ENCODE measurements at regions of chr5 and their contacts with region 1.

Region 1: DNA sequence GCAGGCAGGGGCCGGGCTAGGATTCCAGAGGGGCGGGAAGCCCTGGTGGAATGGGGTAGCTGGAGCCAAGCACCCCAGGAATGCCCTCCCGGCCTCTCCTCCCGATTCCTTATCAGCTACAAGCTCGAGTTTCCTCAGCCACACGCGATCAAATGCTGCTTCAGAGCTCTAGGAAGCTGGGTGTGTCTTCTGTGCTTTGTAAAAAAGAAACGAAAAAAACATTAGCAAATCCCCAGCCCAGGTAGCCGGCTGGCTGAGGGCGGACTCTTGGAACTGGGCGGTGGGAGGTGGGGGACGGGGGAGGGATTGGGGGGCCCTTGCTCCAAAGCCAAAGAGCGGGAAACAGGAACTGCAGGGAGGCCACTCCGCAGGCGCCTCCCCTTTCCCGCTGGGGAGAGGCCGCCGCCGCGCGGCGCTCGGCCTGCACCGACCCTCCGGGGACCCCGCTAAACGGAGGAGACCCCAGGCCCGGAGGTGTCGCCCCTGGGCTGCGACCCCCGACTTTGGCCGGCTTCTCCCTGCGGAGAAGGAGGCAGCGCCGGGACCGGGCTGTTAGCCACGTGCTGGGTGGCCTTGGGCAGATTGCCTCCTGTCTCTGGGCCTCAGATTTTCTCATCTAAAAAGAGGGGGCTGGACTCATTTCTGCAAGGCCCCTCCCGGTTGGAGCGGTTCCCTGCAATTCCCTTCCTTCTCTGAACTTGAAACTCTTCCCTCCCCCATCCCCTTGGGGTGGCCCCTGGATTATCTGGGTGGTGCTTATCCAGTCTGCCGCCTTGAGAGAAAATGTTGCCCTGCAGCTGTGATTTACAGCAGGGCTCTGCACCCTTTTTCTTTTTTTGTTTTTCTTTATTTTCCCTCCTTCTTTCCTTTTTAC is 40.9 kb upstream of the FABP6 start:
- DNase-seq: peak; percentile 78 to 92
- H3K4me3 ChIP-seq: peak overlapping the region; percentile 57; the same call in 1 of the 2 replicates
- H3K27ac ChIP-seq: 0 out of 2 replicates have a peak overlapping the region, but pooled peaks have one; percentile 29
- H3K4me1 ChIP-seq: 0 out of 2 replicates have a peak, but pooled peaks cover 12% of the 10 kb centered on the region
- H3K27me3 ChIP-seq: no peaks in the 10 kb centered on the region
- CTCF ChIP-seq: no peak

Region 2: DNA sequence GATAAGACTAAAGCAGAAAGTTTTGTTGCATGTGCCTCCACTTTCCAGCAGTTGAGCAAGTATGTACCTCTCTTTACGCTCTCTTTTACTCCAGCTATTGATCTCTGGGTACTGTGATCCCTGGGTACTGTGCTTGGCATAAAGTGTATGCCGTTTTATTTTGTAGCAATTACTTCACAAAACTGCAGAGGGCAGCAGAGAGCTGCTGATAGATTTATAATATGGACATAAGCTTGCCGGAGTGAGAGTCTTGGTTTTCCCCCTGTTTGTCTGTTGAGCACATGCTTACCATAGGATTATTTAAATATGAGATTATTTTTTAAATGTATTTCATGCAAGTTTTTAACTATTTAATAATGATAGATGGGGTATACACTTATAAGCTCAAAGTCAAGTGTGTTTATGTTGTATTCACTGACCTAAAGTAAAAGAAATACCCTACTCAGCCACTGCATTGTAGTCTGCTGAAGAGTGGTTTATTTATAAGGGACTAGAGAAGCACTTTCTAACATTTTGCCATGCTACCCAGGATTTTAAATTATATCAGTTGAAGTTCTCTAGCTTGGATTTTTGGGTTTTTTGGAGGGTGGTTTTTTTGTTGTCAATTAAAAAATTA is 166.4 kb before region 1 on chr5:
- CTCF ChIA-PET with region 1: interaction called, 3 read pairs
- POLR2A ChIA-PET with region 1: interaction called, 14 read pairs
- intact Hi-C with region 1: no loop called
- DNase-seq: peak; percentile 40 to 56
- H3K4me3 ChIP-seq: no peak overlapping the region
- H3K27ac ChIP-seq: no peak overlapping the region
- H3K4me1 ChIP-seq: no peaks in the 10 kb centered on the region
- H3K27me3 ChIP-seq: no peaks in the 10 kb centered on the region
- CTCF ChIP-seq: peak; percentile 90

Region 3: GRCh38 chr5:160092960-160093707 is 95.2 kb before region 1 on chr5:
- CTCF ChIA-PET with region 1: no interaction called
- POLR2A ChIA-PET with region 1: no interaction called
- intact Hi-C with region 1: no loop called
- DNase-seq: no peak
- H3K4me3 ChIP-seq: no peak overlapping the region
- H3K27ac ChIP-seq: no peak overlapping the region
- H3K4me1 ChIP-seq: no peaks in the 10 kb centered on the region
- H3K27me3 ChIP-seq: no peaks in the 10 kb centered on the region
- CTCF ChIP-seq: no peak

Region 4: GRCh38 chr5:160155017-160155745 is 33.2 kb before region 1 on chr5:
- CTCF ChIA-PET with region 1: interaction called, 7 read pairs
- POLR2A ChIA-PET with region 1: no interaction called
- intact Hi-C with region 1: loop called (anchors 2 kb)
- DNase-seq: peak; percentile 47 to 91
- H3K4me3 ChIP-seq: no peak overlapping the region
- H3K27ac ChIP-seq: no peak overlapping the region
- H3K4me1 ChIP-seq: peaks cover 16% of the 10 kb centered on the region
- H3K27me3 ChIP-seq: no peaks in the 10 kb centered on the region
- CTCF ChIP-seq: no peak

Region 5: DNA sequence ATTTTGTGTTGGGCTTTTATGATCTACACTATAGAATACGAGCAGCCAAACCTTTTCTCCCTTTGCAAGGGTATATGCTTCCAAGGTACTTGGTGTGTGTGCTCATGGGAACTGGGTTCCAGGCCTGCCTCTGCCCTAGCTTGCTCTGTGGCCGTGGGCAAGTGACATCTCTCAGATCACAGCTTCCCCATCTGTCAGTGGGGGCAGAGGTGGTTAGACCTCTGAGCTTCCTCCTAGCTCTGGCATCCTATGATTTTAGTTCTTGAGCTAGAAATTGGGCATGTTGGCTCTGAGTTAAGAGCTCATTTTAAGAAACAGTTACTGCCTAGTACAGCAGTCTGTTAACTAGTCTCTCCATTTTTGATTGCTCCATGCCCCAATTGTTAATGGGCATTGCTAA is 136.5 kb after region 1 on chr5:
- CTCF ChIA-PET with region 1: interaction called, 11 read pairs
- POLR2A ChIA-PET with region 1: no interaction called
- intact Hi-C with region 1: no loop called
- DNase-seq: no peak
- H3K4me3 ChIP-seq: no peak overlapping the region
- H3K27ac ChIP-seq: no peak overlapping the region
- H3K4me1 ChIP-seq: peaks cover 16% of the 10 kb centered on the region
- H3K27me3 ChIP-seq: no peaks in the 10 kb centered on the region
- CTCF ChIP-seq: no peak

Measured in PC-9 (cell line).